ENCODE measurements at regions of chr9 and their contacts with region 1.

Region 1: GRCh38 chr9:33466565-33467495 is 6.9 kb downstream of the NOL6 start:
- DNase-seq: peak in 1 of 2 experiments; percentile 96
- H3K4me3 ChIP-seq: no peak overlapping the region
- H3K27ac ChIP-seq: peak overlapping the region; percentile 5; the same call in 1 of the 2 replicates
- H3K4me1 ChIP-seq: no peaks in the 10 kb centered on the region
- H3K27me3 ChIP-seq: no peaks in the 10 kb centered on the region
- CTCF ChIP-seq: peak; percentile 94 to 100 (median 99)
- EP300 ChIP-seq: no peak
- POLR2A ChIP-seq: no peak
- RAD21 ChIP-seq: peak; percentile 89 to 95

Region 2: GRCh38 chr9:33364127-33364526 is 102.7 kb before region 1 on chr9:
- CTCF ChIA-PET with region 1: interaction called, 10 read pairs
- POLR2A ChIA-PET with region 1: no interaction called
- DNase-seq: no peak
- H3K4me3 ChIP-seq: no peak overlapping the region
- H3K27ac ChIP-seq: no peak overlapping the region
- H3K4me1 ChIP-seq: no peaks in the 10 kb centered on the region
- H3K27me3 ChIP-seq: no peaks in the 10 kb centered on the region
- CTCF ChIP-seq: no peak
- EP300 ChIP-seq: no peak
- POLR2A ChIP-seq: no peak
- RAD21 ChIP-seq: no peak

Region 3: GRCh38 chr9:33404788-33405362 is 62.0 kb before region 1 on chr9:
- CTCF ChIA-PET with region 1: interaction called, 89 read pairs
- POLR2A ChIA-PET with region 1: interaction called, 5 read pairs
- DNase-seq: no peak
- H3K4me3 ChIP-seq: no peak overlapping the region
- H3K27ac ChIP-seq: no peak overlapping the region
- H3K4me1 ChIP-seq: no peaks in the 10 kb centered on the region
- H3K27me3 ChIP-seq: no peaks in the 10 kb centered on the region
- CTCF ChIP-seq: no peak
- EP300 ChIP-seq: no peak
- POLR2A ChIP-seq: no peak
- RAD21 ChIP-seq: no peak

Region 4: DNA sequence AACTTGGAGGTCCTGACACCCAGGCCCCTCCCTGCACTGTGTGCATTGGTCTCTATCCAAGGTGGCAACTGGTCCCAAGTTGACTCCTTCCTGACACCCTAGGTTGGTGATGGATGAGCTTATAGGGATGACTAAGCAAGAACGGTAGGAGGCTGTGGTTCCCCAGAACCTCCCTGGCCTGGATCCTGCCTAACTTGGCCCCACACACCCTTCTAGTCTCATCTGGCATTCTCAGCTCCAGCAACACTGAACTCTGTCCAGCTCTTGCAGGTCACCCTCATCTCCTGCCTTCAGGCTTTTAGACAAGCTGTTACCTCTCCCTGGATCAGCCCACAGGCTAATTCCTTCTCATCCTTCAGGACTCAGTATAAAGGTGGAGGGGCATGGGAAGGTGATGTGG is 35.9 kb before region 1 on chr9:
- CTCF ChIA-PET with region 1: interaction called, 27 read pairs
- POLR2A ChIA-PET with region 1: interaction called, 3 read pairs
- DNase-seq: no peak
- H3K4me3 ChIP-seq: no peak overlapping the region
- H3K27ac ChIP-seq: no peak overlapping the region
- H3K4me1 ChIP-seq: peaks cover 0 to 2% (median 0%) of the 10 kb centered on the region in 4 experiments; a peak in 1 of 7 replicates
- H3K27me3 ChIP-seq: no peaks in the 10 kb centered on the region
- CTCF ChIP-seq: no peak
- EP300 ChIP-seq: no peak
- POLR2A ChIP-seq: no peak
- RAD21 ChIP-seq: no peak

Region 5: DNA sequence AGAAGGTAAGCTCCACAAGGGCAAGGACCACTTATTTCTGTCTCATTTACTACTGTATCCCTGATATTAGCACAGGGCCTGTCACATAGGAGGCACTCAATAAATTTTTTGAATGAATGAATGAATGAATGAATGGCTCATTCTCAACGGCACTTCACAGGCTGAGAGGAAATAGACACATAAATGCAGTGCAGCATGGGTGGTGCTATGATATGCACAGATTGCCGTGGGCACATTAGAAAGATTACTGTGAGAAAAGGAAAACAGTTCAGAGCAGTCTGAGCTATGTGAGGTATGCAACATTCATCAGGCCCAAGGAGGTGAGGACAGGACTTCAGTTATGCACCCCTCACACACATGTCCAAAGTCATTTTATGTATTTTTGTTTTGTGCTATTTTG is 13.3 kb after region 1 on chr9:
- CTCF ChIA-PET with region 1: interaction called, 358 read pairs
- POLR2A ChIA-PET with region 1: interaction called, 5 read pairs
- DNase-seq: peak in 1 of 2 experiments; percentile 10
- H3K4me3 ChIP-seq: no peak overlapping the region
- H3K27ac ChIP-seq: no peak overlapping the region
- H3K4me1 ChIP-seq: no peaks in the 10 kb centered on the region
- H3K27me3 ChIP-seq: no peaks in the 10 kb centered on the region
- CTCF ChIP-seq: no peak
- EP300 ChIP-seq: no peak
- POLR2A ChIP-seq: no peak
- RAD21 ChIP-seq: no peak

Region 6: GRCh38 chr9:33878691-33879366 is 412.0 kb after region 1 on chr9:
- CTCF ChIA-PET with region 1: no interaction called
- POLR2A ChIA-PET with region 1: no interaction called
- DNase-seq: peak in 1 of 2 experiments; percentile 38
- H3K4me3 ChIP-seq: no peak overlapping the region
- H3K27ac ChIP-seq: no peak overlapping the region
- H3K4me1 ChIP-seq: peaks cover 0 to 7% (median 4%) of the 10 kb centered on the region in 4 experiments; a peak in 3 of 7 replicates
- H3K27me3 ChIP-seq: no peaks in the 10 kb centered on the region
- CTCF ChIP-seq: no peak
- EP300 ChIP-seq: no peak
- POLR2A ChIP-seq: no peak
- RAD21 ChIP-seq: no peak